ENCODE measurements at regions of chr1 and their contacts with region 1.

Region 1: DNA sequence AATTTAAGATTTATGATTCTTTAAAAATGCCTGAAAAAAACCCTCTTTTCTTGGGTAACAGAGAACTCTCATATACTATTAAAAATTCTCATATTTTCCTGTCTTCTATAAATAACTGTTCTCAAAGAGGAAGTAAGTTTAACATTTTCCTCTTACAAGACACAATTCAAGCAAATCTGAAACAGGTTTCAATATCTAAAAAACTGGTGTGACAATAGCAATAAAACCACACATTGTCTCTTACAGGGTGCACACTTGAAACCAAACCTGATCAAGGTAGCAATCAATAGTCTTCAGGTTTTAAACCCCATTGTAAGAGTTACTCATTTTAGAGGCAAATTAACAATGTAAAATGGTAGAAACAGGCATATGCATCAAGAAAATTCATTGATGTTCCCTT is 28.0 kb downstream of the FUBP1 start:
- DNase-seq: no peak
- H3K4me3 ChIP-seq: no peak overlapping the region
- H3K27ac ChIP-seq: no peak overlapping the region
- H3K27me3 ChIP-seq: no peaks in the 10 kb centered on the region
- CTCF ChIP-seq: no peak

Region 2: DNA sequence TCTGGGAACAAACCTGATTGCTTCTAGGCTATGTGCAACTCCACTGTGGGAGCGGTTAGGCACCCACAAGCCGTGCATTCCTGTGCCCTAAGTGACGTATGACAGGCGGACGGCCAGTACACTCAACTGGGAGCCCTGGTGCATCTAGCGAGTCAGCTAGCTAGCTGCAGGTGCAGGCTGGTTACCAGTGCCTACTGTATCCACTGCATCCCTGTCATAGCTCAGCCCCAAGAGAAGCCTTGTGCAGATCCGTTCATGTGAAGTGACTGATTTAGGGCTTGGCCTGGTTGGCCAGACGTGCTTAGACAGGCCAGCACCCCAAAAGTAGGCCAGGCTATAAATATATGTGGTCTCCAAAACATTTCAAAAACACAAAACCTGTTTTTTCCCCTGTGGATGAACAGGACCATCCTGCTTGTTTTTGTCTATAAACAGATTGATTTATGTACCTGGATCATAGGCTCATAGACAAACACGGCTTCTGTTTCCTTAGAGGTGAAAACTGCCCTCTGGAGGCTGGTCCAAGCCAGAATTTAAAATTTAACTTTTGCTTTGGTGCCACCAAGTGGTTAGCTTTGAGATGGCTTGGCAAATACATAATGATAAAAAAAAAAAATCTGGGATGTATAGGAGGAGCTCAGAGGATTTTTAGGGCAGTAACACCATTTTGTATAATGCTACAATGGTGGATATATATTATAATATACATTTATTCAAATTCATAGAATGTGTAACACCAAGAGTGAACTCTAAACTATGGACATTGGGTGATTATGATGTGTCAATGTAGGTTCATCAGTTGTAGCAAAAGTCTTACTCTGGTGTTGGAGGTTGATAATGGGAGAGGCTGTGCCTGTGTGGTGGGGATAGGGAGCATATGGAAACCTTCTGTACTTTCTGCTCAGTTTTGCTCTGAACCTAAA is 163.4 kb after region 1 on chr1:
- in situ Hi-C with region 1: loop called (anchors 25 kb)
- DNase-seq: peak; percentile 73
- H3K4me3 ChIP-seq: no peak overlapping the region
- H3K27ac ChIP-seq: no peak overlapping the region
- H3K27me3 ChIP-seq: no peaks in the 10 kb centered on the region
- CTCF ChIP-seq: peak; percentile 83

Region 3: GRCh38 chr1:78132174-78132947 is 181.5 kb after region 1 on chr1:
- in situ Hi-C with region 1: no loop called
- DNase-seq: no peak
- H3K4me3 ChIP-seq: no peak overlapping the region
- H3K27ac ChIP-seq: no peak overlapping the region
- H3K27me3 ChIP-seq: no peaks in the 10 kb centered on the region
- CTCF ChIP-seq: no peak

Measured in brain microvascular endothelial cell (primary cell).